ENCODE measurements at regions of chr16 and their contacts with region 1.

Region 1: GRCh38 chr16:58000706-58001676 is at the start of gene USB1:
- DNase-seq: peak; percentile 33
- ATAC-seq: peak; percentile 93
- H3K4me3 ChIP-seq: peak within 1 kb of the TSS; percentile 69 to 71
- H3K27ac ChIP-seq: peak within 1 kb of the TSS; percentile 68
- H3K4me1 ChIP-seq: peaks cover 11% of the 10 kb centered on the region
- H3K27me3 ChIP-seq: no peaks in the 10 kb centered on the region
- CTCF ChIP-seq: peak; percentile 85
- total RNA-seq, gene USB1: 58.2 TPM

Region 2: GRCh38 chr16:57757326-57757786 is 243.6 kb before region 1 on chr16:
- CTCF ChIA-PET with region 1: no interaction called
- POLR2A ChIA-PET with region 1: no interaction called
- in situ Hi-C with region 1: no loop called
- intact Hi-C with region 1: loop called (anchors 10 kb)
- DNase-seq: no peak
- ATAC-seq: peak; percentile 90
- H3K4me3 ChIP-seq: no peak overlapping the region
- H3K27ac ChIP-seq: no peak overlapping the region
- H3K4me1 ChIP-seq: no peaks in the 10 kb centered on the region
- H3K27me3 ChIP-seq: no peaks in the 10 kb centered on the region
- CTCF ChIP-seq: peak; percentile 94

Region 3: DNA sequence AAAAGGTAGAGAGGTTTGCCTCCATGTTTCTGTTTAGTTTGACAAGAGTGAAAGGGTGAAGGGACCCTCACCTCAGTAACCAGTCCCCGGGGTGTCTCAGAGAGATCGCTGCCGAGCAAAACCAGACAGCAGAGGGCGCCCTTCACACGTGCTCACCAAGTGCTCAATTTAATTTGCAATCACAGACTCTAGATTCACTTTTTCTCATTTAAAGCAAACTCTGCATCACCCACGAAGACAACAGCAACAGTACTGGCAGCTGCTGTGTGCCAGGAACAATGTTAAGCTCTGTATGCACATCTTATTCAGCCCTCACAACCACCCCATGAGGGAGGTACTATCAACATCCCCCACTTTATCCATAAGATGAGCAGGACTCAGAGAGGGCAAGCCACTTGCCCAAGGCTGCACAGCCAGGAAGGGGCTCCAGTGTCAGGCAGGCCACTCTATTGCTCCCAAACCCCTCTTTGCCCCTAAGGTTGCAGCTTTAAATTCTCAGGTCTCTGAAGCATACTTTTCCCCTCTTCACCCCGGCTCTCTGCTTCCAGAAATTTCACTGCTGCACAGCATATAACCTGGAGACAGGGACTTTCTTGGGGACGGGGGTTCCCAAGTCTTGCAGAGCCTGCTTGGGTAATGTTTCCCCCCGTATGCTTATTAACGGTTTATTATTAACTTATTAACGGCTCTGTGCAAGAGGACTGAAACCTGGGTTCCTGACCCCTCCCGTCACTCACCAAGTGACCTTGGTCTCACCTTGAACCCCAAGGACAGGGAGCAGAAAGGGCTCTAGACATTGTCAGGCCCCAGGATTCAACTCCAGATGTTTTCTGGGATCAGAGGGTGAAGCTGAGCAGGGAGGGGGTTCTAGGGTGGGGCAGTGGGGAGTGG is 101.0 kb before region 1 on chr16:
- CTCF ChIA-PET with region 1: no interaction called
- POLR2A ChIA-PET with region 1: no interaction called
- in situ Hi-C with region 1: no loop called
- intact Hi-C with region 1: loop called (anchors 2 kb)
- DNase-seq: peak; percentile 36
- ATAC-seq: peak; percentile 74
- H3K4me3 ChIP-seq: no peak overlapping the region
- H3K27ac ChIP-seq: no peak overlapping the region
- H3K4me1 ChIP-seq: no peaks in the 10 kb centered on the region
- H3K27me3 ChIP-seq: no peaks in the 10 kb centered on the region
- CTCF ChIP-seq: peak; percentile 87

Region 4: DNA sequence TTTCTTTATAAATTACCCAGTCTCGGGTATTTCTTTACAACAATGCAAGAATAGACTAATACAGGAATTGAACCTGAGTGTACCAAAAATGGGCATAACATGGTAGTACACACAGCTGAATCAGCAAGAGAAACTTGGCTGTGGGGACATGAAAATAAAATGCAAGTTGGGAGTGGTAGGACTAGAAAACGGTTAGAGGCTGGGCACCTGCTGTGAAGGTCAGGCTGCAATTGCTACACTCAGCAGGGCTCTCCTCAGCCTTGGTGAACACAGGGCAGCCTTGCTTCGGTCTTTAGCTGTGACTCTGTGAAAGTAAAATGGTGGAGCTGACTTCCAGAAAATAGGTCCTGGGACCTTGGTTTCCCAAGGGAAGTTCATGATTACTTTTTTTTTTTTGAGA is 75.7 kb before region 1 on chr16:
- CTCF ChIA-PET with region 1: no interaction called
- POLR2A ChIA-PET with region 1: no interaction called
- in situ Hi-C with region 1: no loop called
- intact Hi-C with region 1: no loop called
- DNase-seq: no peak
- ATAC-seq: no peak
- H3K4me3 ChIP-seq: no peak overlapping the region
- H3K27ac ChIP-seq: no peak overlapping the region
- H3K4me1 ChIP-seq: no peaks in the 10 kb centered on the region
- H3K27me3 ChIP-seq: no peaks in the 10 kb centered on the region
- CTCF ChIP-seq: no peak

Region 5: DNA sequence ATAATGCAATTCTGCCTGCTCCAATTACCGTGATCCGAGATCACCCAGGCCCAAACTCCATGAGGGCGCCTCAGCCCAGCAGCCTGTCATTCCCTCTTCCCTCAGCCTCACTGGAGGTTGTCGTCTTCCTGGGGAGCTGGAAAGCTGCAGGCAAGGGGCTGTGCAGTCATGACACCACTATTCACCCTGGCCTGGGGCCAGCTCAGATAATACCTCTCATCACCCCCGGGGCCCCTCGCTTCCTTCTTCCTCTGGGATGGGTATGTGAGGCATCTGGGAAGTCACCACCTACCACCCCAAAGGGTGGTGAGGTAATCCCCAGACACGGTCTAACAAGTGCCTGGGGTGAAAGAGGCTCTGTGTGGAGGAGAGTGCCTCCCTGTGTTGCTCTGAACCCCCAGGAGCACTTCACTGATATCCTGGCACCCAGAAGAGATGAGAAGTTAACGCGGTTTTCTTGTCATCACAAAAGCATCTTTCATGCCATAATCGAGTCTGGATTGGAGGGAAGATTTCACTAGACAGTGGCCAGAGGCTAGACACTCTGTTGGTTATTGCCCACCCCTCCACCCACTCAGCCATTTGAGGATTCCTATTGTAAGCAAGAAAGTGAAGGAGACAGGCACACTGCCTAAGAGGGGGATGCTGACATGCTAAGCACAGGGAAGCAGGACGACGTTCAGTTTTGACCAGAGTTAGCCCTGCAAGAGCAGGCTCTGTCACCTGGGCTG is 109.7 kb after region 1 on chr16:
- CTCF ChIA-PET with region 1: no interaction called
- POLR2A ChIA-PET with region 1: no interaction called
- in situ Hi-C with region 1: loop called (anchors 25 kb)
- intact Hi-C with region 1: no loop called
- DNase-seq: no peak
- ATAC-seq: no peak
- H3K4me3 ChIP-seq: no peak overlapping the region
- H3K27ac ChIP-seq: no peak overlapping the region
- H3K4me1 ChIP-seq: no peaks in the 10 kb centered on the region
- H3K27me3 ChIP-seq: no peaks in the 10 kb centered on the region
- CTCF ChIP-seq: no peak